ENCODE measurements at regions of chr2 and their contacts with region 1.

Region 1: GRCh38 chr2:210203157-210203947 is 21.9 kb downstream of the ACADL start:
- DNase-seq: no peak
- ATAC-seq: no peak
- H3K4me3 ChIP-seq: no peak overlapping the region
- H3K27ac ChIP-seq: no peak overlapping the region
- H3K4me1 ChIP-seq: no peaks in the 10 kb centered on the region
- H3K27me3 ChIP-seq: no peaks in the 10 kb centered on the region

Region 2: GRCh38 chr2:210002158-210003157 is 200.9 kb before region 1 on chr2 and contains the start of gene RPE:
- intact Hi-C with region 1: loop called in 1 of 2 experiments (anchors 10 kb)
- DNase-seq: peak; percentile 98 to 99
- ATAC-seq: peak; percentile 100
- H3K4me3 ChIP-seq: peak within 1 kb of the TSS; percentile 67 to 85
- H3K27ac ChIP-seq: peak within 1 kb of the TSS in 1 of 2 donors; percentile 56
- H3K4me1 ChIP-seq: no peaks in the 10 kb centered on the region
- H3K27me3 ChIP-seq: no peaks in the 10 kb centered on the region
- total RNA-seq, gene RPE: 37.3 to 50.6 TPM

Measured in aorta (tissue), 5 donors.